ENCODE measurements at regions of chr6 and their contacts with region 1.

Region 1: GRCh38 chr6:18503593-18504231 is 116.6 kb downstream of the RNF144B start:
- DNase-seq: peak; percentile 87
- H3K4me3 Mint-ChIP-seq: peak overlapping the region; percentile 56
- H3K27ac Mint-ChIP-seq: peak overlapping the region; percentile 43
- H3K4me1 Mint-ChIP-seq: peaks cover 21% of the 10 kb centered on the region
- H3K27me3 Mint-ChIP-seq: no peaks in the 10 kb centered on the region
- CTCF ChIP-seq: peak; percentile 93

Region 2: DNA sequence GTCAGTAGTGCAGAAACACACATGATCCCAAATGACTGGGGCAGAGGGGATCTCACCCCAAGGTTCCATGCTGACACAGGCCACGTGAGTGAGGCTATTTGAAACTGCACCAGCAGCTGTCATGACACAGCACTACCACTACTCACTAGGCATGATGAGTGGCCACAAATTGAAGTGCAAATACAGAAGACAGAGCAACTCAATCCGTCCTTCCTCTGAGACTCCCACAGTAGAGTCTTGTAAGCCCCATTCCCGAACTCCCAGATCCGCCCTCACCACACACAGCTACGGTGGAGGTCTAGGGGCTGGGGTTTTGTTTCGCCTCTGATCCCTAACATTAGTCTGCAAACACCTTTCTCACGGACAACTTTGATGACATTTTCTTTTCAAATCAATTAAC is 683.7 kb before region 1 on chr6:
- CTCF ChIA-PET with region 1: interaction called, 3 read pairs
- POLR2A ChIA-PET with region 1: no interaction called
- intact Hi-C with region 1: loop called (anchors 10 kb)
- DNase-seq: no peak
- H3K4me3 Mint-ChIP-seq: no peak overlapping the region
- H3K27ac Mint-ChIP-seq: no peak overlapping the region
- H3K4me1 Mint-ChIP-seq: no peaks in the 10 kb centered on the region
- H3K27me3 Mint-ChIP-seq: no peaks in the 10 kb centered on the region
- CTCF ChIP-seq: no peak

Region 3: GRCh38 chr6:18323935-18324705 is 179.6 kb before region 1 on chr6:
- CTCF ChIA-PET with region 1: interaction called, 270 read pairs
- POLR2A ChIA-PET with region 1: interaction called, 5 read pairs
- intact Hi-C with region 1: loop called (anchors 1 kb)
- DNase-seq: peak; percentile 64
- H3K4me3 Mint-ChIP-seq: no peak overlapping the region
- H3K27ac Mint-ChIP-seq: no peak overlapping the region
- H3K4me1 Mint-ChIP-seq: peaks cover 14% of the 10 kb centered on the region
- H3K27me3 Mint-ChIP-seq: no peaks in the 10 kb centered on the region
- CTCF ChIP-seq: peak; percentile 51

Region 4: DNA sequence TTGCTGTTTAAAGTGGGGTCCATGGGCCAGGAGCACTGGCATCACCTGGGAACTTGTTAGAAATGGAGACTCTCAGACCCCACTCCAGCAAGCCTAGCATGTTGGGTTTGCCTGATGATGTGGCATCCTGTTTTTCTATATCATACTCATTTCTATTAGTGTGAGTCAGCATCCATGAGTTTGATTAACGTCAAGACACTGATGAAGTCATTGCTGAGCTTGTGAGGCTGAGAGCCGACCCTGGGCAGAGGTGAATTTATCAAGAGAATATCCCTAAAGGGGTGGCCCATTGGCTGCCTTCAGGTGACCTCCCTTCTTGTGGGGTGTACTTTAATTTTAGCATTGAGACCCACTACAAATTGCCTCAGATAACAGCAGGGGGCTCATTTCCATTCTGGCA is 160.0 kb before region 1 on chr6:
- CTCF ChIA-PET with region 1: interaction called, 11 read pairs
- POLR2A ChIA-PET with region 1: interaction called, 6 read pairs
- intact Hi-C with region 1: loop called (anchors 5 kb)
- DNase-seq: peak; percentile 47
- H3K4me3 Mint-ChIP-seq: no peak overlapping the region
- H3K27ac Mint-ChIP-seq: peak overlapping the region; percentile 83
- H3K4me1 Mint-ChIP-seq: peaks cover 32% of the 10 kb centered on the region
- H3K27me3 Mint-ChIP-seq: no peaks in the 10 kb centered on the region
- CTCF ChIP-seq: no peak

Region 5: GRCh38 chr6:18392346-18392884 is 111.3 kb before region 1 on chr6:
- CTCF ChIA-PET with region 1: interaction called, 12 read pairs
- POLR2A ChIA-PET with region 1: interaction called, 31 read pairs
- intact Hi-C with region 1: loop called (anchors 1 kb)
- DNase-seq: no peak
- H3K4me3 Mint-ChIP-seq: no peak overlapping the region
- H3K27ac Mint-ChIP-seq: no peak overlapping the region
- H3K4me1 Mint-ChIP-seq: peaks cover 35% of the 10 kb centered on the region
- H3K27me3 Mint-ChIP-seq: no peaks in the 10 kb centered on the region
- CTCF ChIP-seq: no peak

Region 6: GRCh38 chr6:18488526-18489270 is 15.0 kb before region 1 on chr6:
- CTCF ChIA-PET with region 1: interaction called, 43 read pairs
- POLR2A ChIA-PET with region 1: interaction called, 8 read pairs
- intact Hi-C with region 1: no loop called
- DNase-seq: peak; percentile 61
- H3K4me3 Mint-ChIP-seq: no peak overlapping the region
- H3K27ac Mint-ChIP-seq: peak overlapping the region; percentile 1
- H3K4me1 Mint-ChIP-seq: peaks cover 37% of the 10 kb centered on the region
- H3K27me3 Mint-ChIP-seq: no peaks in the 10 kb centered on the region
- CTCF ChIP-seq: no peak

Measured in MCF 10A (cell line).